HCT116 (cell line): ENCODE measurements at regions of chr12 and their contacts with region 1.

Region 1: DNA sequence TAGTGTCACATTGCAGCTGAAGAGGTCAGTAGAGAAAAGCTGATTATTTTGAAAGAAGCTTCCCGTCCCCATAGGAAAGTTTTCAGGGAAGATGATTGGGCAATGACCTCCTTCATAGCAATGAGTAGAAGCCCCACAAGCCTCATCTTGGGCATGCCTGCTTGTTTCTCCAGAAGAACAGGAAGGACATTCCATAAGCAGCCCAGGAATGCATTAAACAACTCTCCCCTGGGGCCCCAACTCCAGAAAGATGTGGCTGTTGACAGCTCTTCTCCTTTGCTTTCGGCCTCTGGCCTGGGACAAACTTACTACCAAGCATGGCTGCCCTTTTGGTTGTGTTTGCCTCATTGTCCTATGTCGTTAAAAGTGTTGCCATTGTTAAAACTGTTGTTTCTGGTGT is 5.7 kb upstream of the VDR start:
- DNase-seq: no peak
- ATAC-seq: no peak
- H3K4me3 ChIP-seq: no peak overlapping the region
- H3K27ac ChIP-seq: no peak overlapping the region
- H3K4me1 ChIP-seq: peaks cover 4 to 9% of the 10 kb centered on the region in 2 experiments; a peak in 3 of 4 replicates
- H3K27me3 ChIP-seq: no peaks in the 10 kb centered on the region
- CTCF ChIP-seq: no peak
- POLR2A ChIP-seq: no peak
- RAD21 ChIP-seq: no peak

Region 2: DNA sequence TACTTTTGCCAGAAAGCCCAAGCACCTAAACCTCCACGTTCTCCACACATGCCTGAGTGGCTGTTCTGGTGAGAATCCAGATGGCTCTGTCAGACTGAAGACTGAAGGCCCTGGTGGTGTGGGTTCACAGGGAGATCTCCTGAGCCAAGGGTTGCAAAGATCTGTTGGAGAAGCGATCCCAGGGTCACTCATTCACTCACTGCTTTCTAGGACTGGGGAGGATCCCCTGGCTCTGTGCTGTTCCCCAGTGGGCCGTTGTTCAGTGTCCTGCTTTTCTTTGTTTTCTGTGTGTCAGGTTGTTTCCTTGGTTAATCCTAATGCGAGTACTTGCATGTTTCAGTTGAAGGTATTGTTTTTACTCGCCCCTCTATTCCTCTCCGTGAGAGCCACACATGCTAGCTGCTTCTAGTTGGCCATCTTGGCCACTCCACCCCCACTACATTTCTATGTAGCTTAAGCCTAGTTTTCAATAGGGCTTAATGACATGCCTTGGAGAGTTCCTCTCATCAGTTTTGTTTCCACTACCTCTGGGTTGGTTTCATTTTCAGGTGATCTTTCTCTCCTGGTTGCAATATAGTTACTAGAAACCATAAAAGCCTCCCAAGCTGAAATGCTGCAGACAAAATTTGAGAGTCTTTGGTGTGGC is 1393.4 kb before region 1 on chr12:
- CTCF ChIA-PET with region 1: no interaction called
- POLR2A ChIA-PET with region 1: no interaction called
- RAD21 ChIA-PET with region 1: no interaction called
- intact Hi-C with region 1: loop called (anchors 5 kb)
- DNase-seq: no peak
- ATAC-seq: no peak
- H3K4me3 ChIP-seq: no peak overlapping the region
- H3K27ac ChIP-seq: no peak overlapping the region
- H3K4me1 ChIP-seq: peaks cover 10 to 29% of the 10 kb centered on the region in 2 experiments
- H3K27me3 ChIP-seq: no peaks in the 10 kb centered on the region
- CTCF ChIP-seq: no peak
- POLR2A ChIP-seq: no peak
- RAD21 ChIP-seq: no peak